Caco-2 (cell line): ENCODE measurements at regions of chr10 and their contacts with region 1.

Region 1: DNA sequence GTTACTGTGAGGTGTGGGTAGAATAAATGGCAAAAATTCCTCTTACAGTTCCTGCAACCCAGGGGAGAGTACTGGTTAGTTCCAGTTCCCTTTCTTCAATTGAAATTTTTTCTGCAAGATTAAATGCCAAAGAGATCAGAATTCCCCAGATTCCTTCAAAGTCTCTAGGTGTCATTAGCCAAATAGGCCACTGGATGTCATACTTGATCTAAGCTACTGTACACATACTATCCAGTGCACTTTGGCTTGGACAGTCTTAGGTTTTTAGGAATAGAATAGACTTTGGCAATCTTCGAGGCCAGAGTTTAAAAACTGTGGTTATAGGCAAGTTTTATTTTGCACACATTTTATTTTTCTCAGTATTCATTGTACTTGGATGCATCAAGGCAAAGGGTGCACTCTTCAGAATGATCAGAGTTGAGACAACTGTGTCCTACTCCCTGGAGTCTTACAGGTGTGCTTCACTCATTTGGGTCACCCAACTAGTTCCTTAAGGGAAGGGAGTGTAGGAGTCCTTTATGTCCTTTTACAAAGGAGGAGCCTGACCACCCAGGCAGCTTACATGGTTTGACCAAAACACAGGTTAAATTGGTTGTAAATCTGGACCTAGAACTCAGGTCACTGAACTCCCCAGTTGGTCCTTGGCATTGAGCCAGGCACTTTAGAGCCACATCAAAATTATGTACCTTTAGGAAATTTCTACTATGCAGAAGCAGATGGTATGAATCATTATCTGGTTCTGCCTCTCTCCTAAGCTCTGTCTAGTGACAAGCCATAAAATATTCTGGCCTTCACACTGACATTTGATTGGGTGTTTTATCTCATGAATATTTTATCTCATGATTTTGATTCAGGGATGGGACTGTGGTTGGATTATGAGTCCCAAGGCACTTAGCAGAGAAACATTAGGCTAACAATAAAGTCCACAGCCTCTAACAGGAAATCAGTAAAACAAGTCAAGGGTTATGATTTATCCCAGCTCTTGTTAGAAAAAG is 49.5 kb downstream of the ASAH2B start:
- DNase-seq: peak in 1 of 2 experiments; percentile 68
- H3K4me3 ChIP-seq: no peak overlapping the region
- H3K4me3 Mint-ChIP-seq: no peak overlapping the region
- H3K27ac Mint-ChIP-seq: no peak overlapping the region
- H3K4me1 ChIP-seq: peaks cover 4% of the 10 kb centered on the region; the same call in 1 of the 2 replicates
- H3K4me1 Mint-ChIP-seq: peaks cover 10% of the 10 kb centered on the region
- H3K27me3 ChIP-seq: no peaks in the 10 kb centered on the region
- H3K27me3 Mint-ChIP-seq: peaks cover 6% of the 10 kb centered on the region
- CTCF ChIP-seq: peak; percentile 89 to 91

Region 2: GRCh38 chr10:50861370-50861769 is 72.1 kb after region 1 on chr10:
- CTCF ChIA-PET with region 1: no interaction called
- POLR2A ChIA-PET with region 1: no interaction called
- intact Hi-C with region 1: no loop called
- DNase-seq: no peak
- H3K4me3 ChIP-seq: no peak overlapping the region
- H3K4me3 Mint-ChIP-seq: no peak overlapping the region
- H3K27ac Mint-ChIP-seq: no peak overlapping the region
- H3K4me1 ChIP-seq: peaks cover 21% of the 10 kb centered on the region
- H3K4me1 Mint-ChIP-seq: peaks cover 10% of the 10 kb centered on the region
- H3K27me3 ChIP-seq: no peaks in the 10 kb centered on the region
- H3K27me3 Mint-ChIP-seq: no peaks in the 10 kb centered on the region
- CTCF ChIP-seq: no peak

Region 3: GRCh38 chr10:50896721-50897120 is 107.5 kb after region 1 on chr10:
- CTCF ChIA-PET with region 1: interaction called, 4 read pairs
- POLR2A ChIA-PET with region 1: no interaction called
- intact Hi-C with region 1: loop called (anchors 1 kb)
- DNase-seq: no peak
- H3K4me3 ChIP-seq: no peak overlapping the region
- H3K4me3 Mint-ChIP-seq: no peak overlapping the region
- H3K27ac Mint-ChIP-seq: no peak overlapping the region
- H3K4me1 ChIP-seq: 0 out of 2 replicates have a peak, but pooled peaks cover 5% of the 10 kb centered on the region
- H3K4me1 Mint-ChIP-seq: no peaks in the 10 kb centered on the region
- H3K27me3 ChIP-seq: no peaks in the 10 kb centered on the region
- H3K27me3 Mint-ChIP-seq: no peaks in the 10 kb centered on the region
- CTCF ChIP-seq: no peak

Region 4: DNA sequence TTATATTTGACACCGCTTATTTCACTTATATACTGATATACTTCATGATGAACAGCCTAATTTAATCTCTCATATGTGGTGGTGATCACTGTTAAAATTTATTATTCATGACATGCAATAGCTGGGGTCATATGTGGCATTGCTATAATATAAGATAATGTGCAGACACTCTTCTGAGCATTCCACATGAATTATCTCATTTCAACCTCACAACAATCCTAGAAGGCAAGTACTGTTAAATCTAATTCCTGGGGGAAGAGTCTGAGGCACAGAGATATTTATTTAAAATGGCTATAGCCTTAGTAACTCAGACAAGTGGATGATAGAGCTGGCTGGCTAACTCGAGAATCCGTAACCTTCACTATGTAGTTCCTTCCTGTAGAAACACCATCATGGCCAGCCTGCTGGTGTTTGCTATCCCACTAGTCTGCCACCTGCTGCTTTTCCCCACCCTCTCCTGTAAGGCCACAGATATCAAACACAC is 142.7 kb after region 1 on chr10:
- CTCF ChIA-PET with region 1: no interaction called
- POLR2A ChIA-PET with region 1: no interaction called
- intact Hi-C with region 1: loop called (anchors 1 kb)
- DNase-seq: peak in 1 of 2 experiments; percentile 10
- H3K4me3 ChIP-seq: no peak overlapping the region
- H3K4me3 Mint-ChIP-seq: no peak overlapping the region
- H3K27ac Mint-ChIP-seq: no peak overlapping the region
- H3K4me1 ChIP-seq: no peaks in the 10 kb centered on the region
- H3K4me1 Mint-ChIP-seq: no peaks in the 10 kb centered on the region
- H3K27me3 ChIP-seq: no peaks in the 10 kb centered on the region
- H3K27me3 Mint-ChIP-seq: peaks cover 28% of the 10 kb centered on the region
- CTCF ChIP-seq: peak in 1 of 2 experiments; percentile 43

Region 5: GRCh38 chr10:50937230-50937907 is 148.1 kb after region 1 on chr10:
- CTCF ChIA-PET with region 1: no interaction called
- POLR2A ChIA-PET with region 1: no interaction called
- intact Hi-C with region 1: loop called (anchors 1 kb)
- DNase-seq: peak in 1 of 2 experiments; percentile 54
- H3K4me3 ChIP-seq: no peak overlapping the region
- H3K4me3 Mint-ChIP-seq: no peak overlapping the region
- H3K27ac Mint-ChIP-seq: no peak overlapping the region
- H3K4me1 ChIP-seq: no peaks in the 10 kb centered on the region
- H3K4me1 Mint-ChIP-seq: no peaks in the 10 kb centered on the region
- H3K27me3 ChIP-seq: no peaks in the 10 kb centered on the region
- H3K27me3 Mint-ChIP-seq: peaks cover 32% of the 10 kb centered on the region
- CTCF ChIP-seq: peak; percentile 51 to 91

Region 6: DNA sequence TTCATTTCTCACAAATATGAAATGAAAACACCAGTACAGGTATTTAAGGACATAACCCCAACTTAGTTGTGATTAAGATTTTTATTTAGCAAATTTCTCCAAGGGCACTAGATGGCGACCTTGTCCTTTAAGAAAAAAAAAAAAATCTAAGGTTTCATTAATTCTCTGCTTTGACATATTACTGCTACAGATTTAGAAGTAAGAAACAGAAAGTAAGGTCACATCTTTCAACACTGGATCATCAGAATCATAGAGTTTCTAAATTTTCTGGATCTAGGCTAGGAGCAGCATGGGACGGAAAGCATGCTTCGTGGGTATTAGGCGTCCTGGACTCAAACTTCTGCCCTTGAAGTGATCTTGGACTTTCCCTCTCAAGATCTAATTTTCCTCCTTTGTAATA is 199.5 kb after region 1 on chr10:
- CTCF ChIA-PET with region 1: interaction called, 5 read pairs
- POLR2A ChIA-PET with region 1: no interaction called
- intact Hi-C with region 1: loop called (anchors 1 kb)
- DNase-seq: no peak
- H3K4me3 ChIP-seq: no peak overlapping the region
- H3K4me3 Mint-ChIP-seq: no peak overlapping the region
- H3K27ac Mint-ChIP-seq: no peak overlapping the region
- H3K4me1 ChIP-seq: 0 out of 2 replicates have a peak, but pooled peaks cover 4% of the 10 kb centered on the region
- H3K4me1 Mint-ChIP-seq: peaks cover 9% of the 10 kb centered on the region
- H3K27me3 ChIP-seq: peaks cover 8% of the 10 kb centered on the region
- H3K27me3 Mint-ChIP-seq: peaks cover 27% of the 10 kb centered on the region
- CTCF ChIP-seq: peak; percentile 41 to 79